Activated CD8-positive, alpha-beta T cell treated with anti-CD3 and anti-CD28 coated beads for 36 hours (primary cell): ENCODE measurements at regions of chr6 and their contacts with region 1.

Region 1: GRCh38 chr6:27864906-27865849 is 47.0 kb downstream of the OR2B2 start:
- DNase-seq: peak; percentile 81
- ATAC-seq: peak; percentile 58
- H3K4me3 Mint-ChIP-seq: peak overlapping the region; percentile 91
- H3K27ac Mint-ChIP-seq: peak overlapping the region; percentile 98
- H3K4me1 Mint-ChIP-seq: peaks cover 27% of the 10 kb centered on the region
- H3K27me3 Mint-ChIP-seq: no peaks in the 10 kb centered on the region
- CTCF ChIP-seq: no peak

Region 2: DNA sequence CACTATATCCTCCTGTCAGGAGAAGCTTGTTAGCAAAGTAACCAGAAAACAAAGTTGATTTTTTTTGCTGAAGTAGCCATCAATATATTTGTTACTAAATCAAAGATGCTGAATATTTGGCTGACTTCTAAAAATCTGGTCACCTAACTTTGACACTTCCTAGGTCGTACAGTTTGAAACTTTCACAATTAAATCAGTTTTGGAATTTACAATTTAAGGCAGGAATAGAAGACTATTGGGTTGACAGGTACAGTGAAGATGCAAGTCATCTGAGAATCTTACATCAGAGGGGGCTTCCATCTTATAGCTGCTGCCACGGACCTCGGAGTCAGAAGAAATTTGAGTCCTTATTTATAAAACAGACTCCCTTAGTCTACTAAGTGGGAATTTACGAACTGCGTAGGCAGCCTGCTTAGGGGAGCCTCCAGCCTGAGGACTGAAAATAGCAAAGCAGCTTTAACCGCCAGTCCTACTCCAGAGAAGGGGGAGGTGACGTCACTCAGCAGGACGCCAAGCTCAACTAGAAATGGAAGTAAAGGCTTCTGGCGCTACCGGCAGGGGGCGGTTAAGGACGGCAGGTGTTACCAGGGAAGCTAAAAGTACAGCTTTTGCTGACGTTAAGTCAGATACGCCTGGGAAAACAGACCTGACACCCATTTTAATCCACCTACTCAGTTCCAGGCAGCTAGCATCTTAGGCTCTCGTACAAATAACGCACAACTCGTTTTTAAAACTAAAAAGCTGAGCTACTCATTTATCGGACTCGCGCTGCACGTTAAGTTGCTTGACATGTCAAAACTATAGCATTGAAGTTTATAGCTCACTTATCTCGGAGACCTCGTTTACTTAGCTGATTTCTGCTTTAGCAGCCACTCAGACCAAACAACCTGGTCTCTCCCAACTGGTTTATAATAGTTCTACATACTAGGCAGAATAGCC is 1839.0 kb before region 1 on chr6:
- CTCF ChIA-PET with region 1: no interaction called
- POLR2A ChIA-PET with region 1: interaction called, 22 read pairs
- intact Hi-C with region 1: no loop called
- DNase-seq: peak; percentile 97
- ATAC-seq: peak; percentile 41
- H3K4me3 Mint-ChIP-seq: peak overlapping the region; percentile 77
- H3K27ac Mint-ChIP-seq: peak overlapping the region; percentile 95
- H3K4me1 Mint-ChIP-seq: peaks cover 51% of the 10 kb centered on the region
- H3K27me3 Mint-ChIP-seq: peaks cover 2% of the 10 kb centered on the region
- CTCF ChIP-seq: peak; percentile 75

Region 3: DNA sequence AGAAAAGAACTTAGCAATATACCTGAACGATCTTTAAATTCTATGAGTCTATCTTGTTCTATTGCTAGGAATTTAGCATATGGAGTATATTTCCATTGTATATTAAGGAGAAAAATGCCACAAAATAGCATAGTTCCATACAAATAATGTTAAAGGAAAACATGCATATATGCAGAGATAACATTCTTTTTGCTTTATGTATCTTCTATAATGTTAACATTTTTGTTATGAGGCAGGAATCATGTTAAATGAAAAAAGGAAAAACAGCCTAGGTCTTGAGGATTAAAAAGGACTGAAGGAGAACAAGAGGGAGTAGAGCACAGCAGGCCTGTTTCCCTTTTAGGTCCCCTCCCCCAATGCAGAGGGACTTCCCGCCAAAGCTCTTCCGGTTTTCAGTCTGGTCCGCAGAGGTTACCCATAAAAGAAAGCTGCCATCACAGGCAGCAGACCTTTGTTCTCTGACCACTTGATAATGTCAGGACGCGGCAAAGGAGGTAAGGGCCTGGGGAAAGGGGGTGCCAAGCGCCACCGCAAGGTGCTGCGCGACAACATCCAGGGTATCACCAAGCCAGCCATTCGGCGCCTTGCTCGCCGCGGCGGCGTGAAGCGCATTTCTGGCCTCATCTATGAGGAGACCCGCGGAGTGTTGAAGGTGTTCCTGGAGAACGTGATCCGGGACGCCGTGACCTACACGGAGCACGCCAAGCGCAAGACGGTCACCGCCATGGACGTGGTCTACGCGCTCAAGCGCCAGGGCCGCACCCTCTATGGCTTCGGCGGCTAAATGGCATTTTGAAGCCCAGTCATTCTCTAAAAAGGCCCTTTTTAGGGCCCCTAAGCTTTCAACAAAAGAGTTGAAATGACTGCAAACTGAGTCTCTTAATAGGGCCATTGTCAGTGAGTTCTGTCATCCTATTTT is 726.1 kb before region 1 on chr6:
- CTCF ChIA-PET with region 1: no interaction called
- POLR2A ChIA-PET with region 1: interaction called, 85 read pairs
- intact Hi-C with region 1: no loop called
- DNase-seq: peak; percentile 83
- ATAC-seq: peak; percentile 80
- H3K4me3 Mint-ChIP-seq: peak overlapping the region; percentile 95
- H3K27ac Mint-ChIP-seq: peak overlapping the region; percentile 98
- H3K4me1 Mint-ChIP-seq: peaks cover 33% of the 10 kb centered on the region
- H3K27me3 Mint-ChIP-seq: no peaks in the 10 kb centered on the region
- CTCF ChIP-seq: no peak

Region 4: GRCh38 chr6:27825025-27825793 is 40.0 kb before region 1 on chr6:
- CTCF ChIA-PET with region 1: interaction called, 6 read pairs
- POLR2A ChIA-PET with region 1: interaction called, 1,105 read pairs
- intact Hi-C with region 1: no loop called
- DNase-seq: no peak
- ATAC-seq: peak; percentile 1
- H3K4me3 Mint-ChIP-seq: peak overlapping the region; percentile 91
- H3K27ac Mint-ChIP-seq: peak overlapping the region; percentile 99
- H3K4me1 Mint-ChIP-seq: peaks cover 25% of the 10 kb centered on the region
- H3K27me3 Mint-ChIP-seq: no peaks in the 10 kb centered on the region
- CTCF ChIP-seq: no peak

Region 5: DNA sequence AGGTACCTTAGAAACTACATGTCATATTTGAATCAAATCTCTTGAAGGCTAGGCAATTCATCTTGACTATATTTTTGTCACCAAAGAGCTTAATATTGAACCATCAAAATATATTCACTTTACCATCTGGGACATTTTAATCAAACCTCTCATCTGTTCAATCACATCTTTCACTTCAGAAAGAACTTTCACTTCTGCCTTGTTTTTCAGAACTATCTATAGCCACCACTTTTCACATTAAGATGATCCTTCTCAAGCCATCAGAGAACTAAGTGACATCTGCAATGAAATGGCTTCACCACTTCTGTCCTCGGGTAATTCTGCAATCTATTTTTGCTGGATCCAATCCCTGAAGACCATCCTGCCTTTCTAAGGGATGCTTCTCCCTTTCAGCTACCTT is 10.8 kb before region 1 on chr6:
- CTCF ChIA-PET with region 1: no interaction called
- POLR2A ChIA-PET with region 1: interaction called, 40 read pairs
- intact Hi-C with region 1: no loop called
- DNase-seq: no peak
- ATAC-seq: no peak
- H3K4me3 Mint-ChIP-seq: no peak overlapping the region
- H3K27ac Mint-ChIP-seq: no peak overlapping the region
- H3K4me1 Mint-ChIP-seq: no peaks in the 10 kb centered on the region
- H3K27me3 Mint-ChIP-seq: no peaks in the 10 kb centered on the region
- CTCF ChIP-seq: no peak